ENCODE measurements at regions of chr11 and their contacts with region 1.

Region 1: DNA sequence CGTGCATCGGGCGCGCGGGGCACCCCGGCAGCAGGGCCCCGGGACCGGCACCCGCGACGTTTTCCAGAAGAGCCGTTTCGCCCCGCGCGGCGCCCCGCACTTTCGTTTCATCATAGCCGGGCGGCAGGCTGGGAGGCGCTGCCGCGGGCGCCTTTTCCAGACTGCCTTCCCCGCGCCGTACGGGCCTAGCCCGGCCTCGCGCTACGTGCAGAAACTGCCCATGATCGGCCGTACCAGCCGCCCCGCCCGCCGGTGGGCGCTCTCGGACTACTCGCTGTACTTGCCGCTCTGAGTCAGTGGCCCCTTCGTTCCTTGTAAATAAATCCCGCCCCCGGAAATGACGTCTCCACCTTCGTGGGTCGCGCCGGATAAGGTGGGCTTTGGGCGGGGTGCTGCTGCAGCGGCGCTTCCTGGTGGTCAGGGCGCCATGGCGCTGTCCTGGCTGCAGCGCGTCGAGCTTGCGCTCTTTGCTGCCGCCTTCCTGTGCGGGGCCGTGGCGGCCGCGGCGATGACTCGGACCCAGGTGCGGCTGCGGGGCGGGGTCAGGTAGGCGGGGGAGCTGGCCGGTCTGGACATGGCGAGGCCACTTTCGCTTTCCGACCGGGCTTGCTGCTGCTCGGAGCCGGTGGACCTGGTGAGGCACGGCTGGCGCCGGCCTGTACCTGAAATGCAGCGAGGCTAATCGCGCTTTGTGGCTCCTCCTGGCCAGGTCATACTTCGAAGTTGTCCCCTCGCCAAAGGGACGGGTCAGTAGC is at the start of gene TMEM179B:
- DNase-seq: peak; percentile 97 to 100 (median 99)

Region 2: DNA sequence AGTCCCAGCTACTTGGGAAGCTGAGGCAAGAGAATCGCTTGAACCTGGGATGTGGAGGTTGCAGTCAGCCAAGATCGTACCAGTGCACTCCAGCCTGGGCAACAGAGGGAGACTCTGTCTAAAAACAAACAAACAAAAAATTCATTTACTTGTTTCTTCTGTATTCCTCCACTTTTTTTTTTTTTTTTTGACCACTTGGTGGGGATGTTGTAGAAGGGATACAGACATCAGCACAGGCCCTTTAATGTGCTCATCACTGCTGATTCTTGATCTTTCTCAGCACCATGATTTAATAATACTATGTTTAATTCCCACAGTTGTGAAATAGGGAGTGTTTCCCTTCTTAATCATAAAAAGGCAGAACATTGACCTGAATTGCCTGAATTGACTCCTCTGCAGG is 54.4 kb before region 1 on chr11:
- intact Hi-C with region 1: no loop called
- DNase-seq: no peak

Region 3: DNA sequence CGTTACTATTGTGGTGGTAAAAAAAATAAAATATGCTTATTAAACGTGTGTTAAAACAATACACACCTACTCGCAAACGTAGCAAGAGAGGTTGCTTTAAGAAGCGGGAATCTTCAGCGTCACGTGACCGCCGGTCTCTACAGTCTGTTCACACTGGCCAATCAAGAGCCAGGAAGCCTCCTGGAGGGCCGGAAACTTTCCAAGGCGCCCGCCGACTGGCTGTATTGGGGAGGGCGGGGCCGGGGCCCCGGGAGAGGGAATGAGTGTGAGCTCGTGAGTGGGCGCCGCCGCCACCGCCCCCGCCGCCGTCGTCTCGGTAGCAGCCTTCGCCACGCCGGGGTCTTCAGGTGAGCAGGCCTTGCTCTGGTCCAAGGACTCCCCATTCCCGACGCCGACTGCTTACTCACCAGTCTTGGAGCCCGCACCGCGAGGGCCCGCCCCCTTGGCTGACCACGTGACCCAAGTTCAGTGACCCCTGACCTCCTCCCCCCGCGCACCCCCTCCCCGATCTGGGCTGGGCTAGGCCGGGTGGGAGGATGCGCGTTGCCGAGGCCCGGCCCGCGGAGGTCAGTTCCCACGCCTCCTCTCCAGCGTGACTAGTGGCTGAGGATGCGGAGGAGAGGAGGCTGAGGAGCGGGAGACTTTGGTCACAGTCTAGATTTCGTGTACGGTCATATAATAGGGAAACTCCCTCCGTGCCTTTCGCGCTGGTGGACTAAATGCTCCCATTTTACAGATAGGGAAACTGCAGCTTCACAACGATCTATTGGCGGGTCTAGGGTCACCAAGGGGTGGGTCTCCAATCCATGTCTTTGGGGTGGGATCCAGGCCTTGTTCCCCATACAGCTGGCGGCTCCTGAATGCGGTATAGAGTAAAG is 15.8 kb before region 1 on chr11 and contains the start of gene TAF6L:
- intact Hi-C with region 1: loop called (anchors 1 kb)
- DNase-seq: peak; percentile 96 to 99 (median 98)

Region 4: GRCh38 chr11:62831520-62832335 is 44.5 kb after region 1 on chr11 and contains the start of gene STX5:
- intact Hi-C with region 1: loop called (anchors 5 kb)
- DNase-seq: peak; percentile 100

Region 5: DNA sequence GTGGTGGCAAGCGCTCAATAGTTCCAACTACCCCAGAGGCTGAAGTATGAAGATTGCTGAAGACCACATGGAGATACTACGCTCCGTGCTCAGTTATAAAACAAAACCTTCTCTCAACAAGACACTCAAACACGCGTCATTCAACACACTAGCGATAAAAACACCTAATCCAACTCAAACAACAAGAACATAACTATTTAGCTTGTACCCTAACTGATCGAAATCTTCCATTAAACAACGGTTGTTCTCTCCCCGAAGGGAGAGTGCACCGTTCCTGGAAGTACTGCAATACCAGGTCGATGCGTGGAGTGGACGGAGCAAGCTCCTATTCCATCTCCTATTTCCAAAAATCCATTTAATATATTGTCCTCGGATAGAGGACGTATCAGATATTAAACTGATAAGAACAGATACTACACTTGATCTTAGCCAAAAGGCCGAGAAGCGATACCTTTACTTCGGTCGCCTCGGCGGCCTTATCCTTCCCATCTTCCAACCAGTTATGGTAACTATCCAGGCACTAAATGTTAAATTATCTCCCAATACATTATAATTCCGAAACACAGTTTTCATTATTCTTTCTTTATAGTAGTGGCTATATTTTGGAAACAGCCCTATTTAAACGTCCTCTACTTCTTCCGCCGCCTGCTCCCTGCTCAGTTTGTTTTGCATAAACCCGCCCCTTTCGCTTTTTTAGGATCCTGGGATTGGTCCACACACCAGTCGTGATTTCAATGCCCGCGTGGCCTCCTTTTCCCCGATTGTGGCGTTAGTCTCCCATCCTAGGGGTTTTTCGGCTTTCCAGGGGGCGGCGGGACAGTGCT is 54.4 kb after region 1 on chr11:
- intact Hi-C with region 1: loop called (anchors 5 kb)
- DNase-seq: peak; percentile 67 to 97 (median 82)

Region 6: GRCh38 chr11:62880803-62881578 is 93.8 kb after region 1 on chr11 and contains the start of gene SLC3A2:
- intact Hi-C with region 1: loop called (anchors 5 kb)
- DNase-seq: peak; percentile 73 to 97 (median 84)

Measured in posterior cingulate gyrus (tissue), 11 donors.